Transverse colon (tissue), 4 donors: ENCODE measurements at regions of chr5 and their contacts with region 1.

Region 1: DNA sequence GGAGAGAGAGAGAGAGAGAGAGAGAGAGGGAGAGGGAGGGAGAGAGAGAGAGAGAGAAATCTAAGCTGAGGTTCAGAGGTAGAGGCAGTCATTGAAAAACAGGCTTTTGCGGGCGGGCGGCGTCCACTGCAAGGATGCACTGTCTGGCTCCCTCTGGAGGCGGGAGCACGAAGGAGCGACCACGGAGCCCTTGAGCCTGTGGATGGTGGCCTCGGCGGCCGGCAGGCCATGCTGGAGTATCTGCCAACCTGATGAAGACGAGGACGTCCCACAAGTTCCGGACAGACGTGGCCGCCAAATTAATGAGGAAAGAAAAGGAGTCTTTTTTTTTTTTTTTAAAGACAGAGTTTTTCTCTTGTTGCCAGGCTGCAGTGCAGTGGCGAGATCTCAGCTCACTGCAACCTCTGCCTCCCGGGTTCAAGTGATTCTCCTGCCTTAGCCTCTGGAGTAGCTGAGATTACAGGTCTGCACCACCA is 2.2 kb upstream of the CCDC125 start:
- DNase-seq: peak; percentile 88
- H3K4me3 ChIP-seq: no peak overlapping the region
- H3K27ac ChIP-seq: no peak overlapping the region
- H3K4me1 ChIP-seq: peaks cover 0 to 31% (median 16%) of the 10 kb centered on the region in 4 donors
- H3K27me3 ChIP-seq: no peaks in the 10 kb centered on the region
- CTCF ChIP-seq: peak; percentile 73 to 80 (median 75)
- EP300 ChIP-seq: no peak
- POLR2A ChIP-seq: no peak

Region 2: DNA sequence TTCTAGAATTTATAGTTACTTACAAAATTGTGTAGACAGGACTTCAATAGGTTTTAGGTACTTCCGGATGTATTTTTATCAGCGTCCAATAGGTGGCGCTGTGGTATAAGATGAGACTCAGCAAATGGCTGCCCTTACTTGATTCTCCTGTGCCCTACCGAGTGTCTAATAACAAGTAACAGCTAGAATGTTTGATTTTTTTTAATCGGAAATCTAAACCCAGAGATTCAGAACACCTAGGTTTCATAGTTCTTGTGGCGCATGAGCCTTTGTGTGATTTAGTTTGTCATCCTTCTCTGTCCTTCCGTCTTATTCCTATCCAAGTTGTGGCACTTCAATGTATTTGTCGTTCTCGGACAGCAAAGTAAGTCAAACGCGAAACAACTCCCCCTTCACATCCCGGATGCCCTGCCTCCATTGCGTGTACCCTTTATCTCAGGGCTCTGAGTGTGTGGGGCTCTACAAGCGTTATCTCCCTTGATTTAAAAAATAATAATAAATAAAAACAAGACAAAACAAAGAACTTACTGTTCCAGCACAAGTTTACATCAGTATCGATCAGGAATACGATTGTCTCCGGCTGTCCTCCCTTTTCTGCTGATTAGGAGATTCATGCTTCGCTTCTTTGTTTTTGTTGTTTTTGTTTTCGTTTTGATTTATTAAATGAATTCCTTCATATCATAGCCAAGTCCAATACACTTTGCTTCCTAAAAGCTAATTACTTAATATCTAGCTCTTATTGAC is 291.7 kb before region 1 on chr5:
- in situ Hi-C with region 1: no loop called
- intact Hi-C with region 1: loop called (anchors 10 kb)
- DNase-seq: peak; percentile 82
- H3K4me3 ChIP-seq: peak overlapping the region; percentile 17 to 80 (median 42)
- H3K27ac ChIP-seq: peak overlapping the region; percentile 61 to 81 (median 73)
- H3K4me1 ChIP-seq: peaks cover 0 to 4% (median 0%) of the 10 kb centered on the region in 4 donors
- H3K27me3 ChIP-seq: no peaks in the 10 kb centered on the region
- CTCF ChIP-seq: peak; percentile 83 to 95 (median 91)
- EP300 ChIP-seq: no peak
- POLR2A ChIP-seq: no peak

Region 3: GRCh38 chr5:69093771-69094482 is 240.9 kb before region 1 on chr5 and contains the start of gene SLC30A5:
- in situ Hi-C with region 1: loop called in 3 of 4 experiments (anchors 10 to 25 kb)
- intact Hi-C with region 1: no loop called
- DNase-seq: peak; percentile 99
- H3K4me3 ChIP-seq: peak within 1 kb of the TSS; percentile 72 to 95 (median 83)
- H3K27ac ChIP-seq: peak within 1 kb of the TSS; percentile 98 to 99 (median 98)
- H3K4me1 ChIP-seq: peaks cover 12 to 19% (median 13%) of the 10 kb centered on the region in 4 donors
- H3K27me3 ChIP-seq: no peaks in the 10 kb centered on the region
- CTCF ChIP-seq: peak; percentile 73 to 98 (median 92)
- EP300 ChIP-seq: no peak
- POLR2A ChIP-seq: peak; percentile 91
- total RNA-seq, gene SLC30A5: 22.3 to 69.9 (median 41.9) TPM

Region 4: GRCh38 chr5:69166686-69167492 is 167.9 kb before region 1 on chr5 and contains the start of gene CCNB1:
- in situ Hi-C with region 1: loop called in 1 of 4 experiments (anchors 25 kb)
- intact Hi-C with region 1: no loop called
- DNase-seq: peak; percentile 98
- H3K4me3 ChIP-seq: peak within 1 kb of the TSS; percentile 50 to 81 (median 59)
- H3K27ac ChIP-seq: peak within 1 kb of the TSS; percentile 59 to 70 (median 64)
- H3K4me1 ChIP-seq: peaks cover 0 to 20% (median 16%) of the 10 kb centered on the region in 4 donors
- H3K27me3 ChIP-seq: no peaks in the 10 kb centered on the region
- CTCF ChIP-seq: peak in 1 of 5 experiments; percentile 16
- EP300 ChIP-seq: no peak
- POLR2A ChIP-seq: no peak
- total RNA-seq, gene CCNB1: 2.2 to 16.9 (median 6.3) TPM